IMR-90 (cell line): ENCODE measurements at regions of chr20 and their contacts with region 1.

Region 1: GRCh38 chr20:56400090-56400542 is 7.7 kb downstream of the CSTF1 start:
- DNase-seq: peak; percentile 84
- ATAC-seq: peak; percentile 87
- H3K4me3 ChIP-seq: no peak overlapping the region
- H3K27ac ChIP-seq: no peak overlapping the region; the same call in 1 of the 2 replicates
- H3K4me1 ChIP-seq: no peaks in the 10 kb centered on the region
- H3K27me3 ChIP-seq: no peaks in the 10 kb centered on the region
- CTCF ChIP-seq: peak; percentile 77
- POLR2A ChIP-seq: no peak
- RAD21 ChIP-seq: peak; percentile 87

Region 2: GRCh38 chr20:56468316-56469082 is 68.4 kb after region 1 on chr20 and contains the start of gene RTF2:
- CTCF ChIA-PET with region 1: no interaction called
- POLR2A ChIA-PET with region 1: no interaction called
- dilution Hi-C with region 1: no loop called
- in situ Hi-C with region 1: loop called (anchors 5 kb)
- intact Hi-C with region 1: loop called (anchors 1 kb)
- DNase-seq: peak; percentile 96
- ATAC-seq: peak; percentile 100
- H3K4me3 ChIP-seq: peak within 1 kb of the TSS; percentile 85
- H3K27ac ChIP-seq: peak within 1 kb of the TSS; percentile 84
- H3K4me1 ChIP-seq: 0 out of 2 replicates have a peak, but pooled peaks cover 2% of the 10 kb centered on the region
- H3K27me3 ChIP-seq: no peaks in the 10 kb centered on the region
- CTCF ChIP-seq: no peak
- POLR2A ChIP-seq: peak; percentile 75
- RAD21 ChIP-seq: peak; percentile 42; the same call in 1 of the 2 replicates
- total RNA-seq, gene RTF2: 109 and 118 TPM in 2 replicates

Region 3: GRCh38 chr20:56513161-56514150 is 113.3 kb after region 1 on chr20:
- CTCF ChIA-PET with region 1: no interaction called
- POLR2A ChIA-PET with region 1: no interaction called
- dilution Hi-C with region 1: no loop called
- in situ Hi-C with region 1: no loop called
- intact Hi-C with region 1: loop called (anchors 2 kb)
- DNase-seq: peak; percentile 7
- ATAC-seq: peak; percentile 39; the same call in 1 of the 2 replicates
- H3K4me3 ChIP-seq: no peak overlapping the region
- H3K27ac ChIP-seq: no peak overlapping the region
- H3K4me1 ChIP-seq: peaks cover 2% of the 10 kb centered on the region; the same call in 1 of the 2 replicates
- H3K27me3 ChIP-seq: no peaks in the 10 kb centered on the region
- CTCF ChIP-seq: no peak
- POLR2A ChIP-seq: no peak
- RAD21 ChIP-seq: no peak